ENCODE measurements at regions of chr12 and their contacts with region 1.

Region 1: GRCh38 chr12:121144416-121144914 is 11.8 kb downstream of the P2RX7 start:
- DNase-seq: peak; percentile 92 to 99 (median 96)
- H3K4me3 ChIP-seq: peak overlapping the region in 1 of 3 experiments; percentile 29
- H3K4me3 Mint-ChIP-seq: peak overlapping the region; percentile 40 to 43
- H3K27ac ChIP-seq: peak overlapping the region; percentile 91 to 95
- H3K27ac Mint-ChIP-seq: peak overlapping the region; percentile 99 to 100 (median 99)
- H3K4me1 ChIP-seq: peaks cover 66 to 73% of the 10 kb centered on the region in 2 donors
- H3K4me1 Mint-ChIP-seq: peaks cover 70% of the 10 kb centered on the region
- H3K27me3 ChIP-seq: no peaks in the 10 kb centered on the region
- H3K27me3 Mint-ChIP-seq: peaks cover 0 to 3% (median 0%) of the 10 kb centered on the region in 3 donors
- CTCF ChIP-seq: no peak

Region 2: GRCh38 chr12:121089031-121089812 is 55.2 kb before region 1 on chr12:
- intact Hi-C with region 1: no loop called
- DNase-seq: no peak
- H3K4me3 ChIP-seq: no peak overlapping the region
- H3K4me3 Mint-ChIP-seq: no peak overlapping the region
- H3K27ac ChIP-seq: no peak overlapping the region
- H3K27ac Mint-ChIP-seq: no peak overlapping the region
- H3K4me1 ChIP-seq: peaks cover 16 to 23% of the 10 kb centered on the region in 2 donors
- H3K4me1 Mint-ChIP-seq: peaks cover 34% of the 10 kb centered on the region
- H3K27me3 ChIP-seq: no peaks in the 10 kb centered on the region
- H3K27me3 Mint-ChIP-seq: peaks cover 0 to 8% (median 0%) of the 10 kb centered on the region in 3 donors
- CTCF ChIP-seq: no peak

Region 3: DNA sequence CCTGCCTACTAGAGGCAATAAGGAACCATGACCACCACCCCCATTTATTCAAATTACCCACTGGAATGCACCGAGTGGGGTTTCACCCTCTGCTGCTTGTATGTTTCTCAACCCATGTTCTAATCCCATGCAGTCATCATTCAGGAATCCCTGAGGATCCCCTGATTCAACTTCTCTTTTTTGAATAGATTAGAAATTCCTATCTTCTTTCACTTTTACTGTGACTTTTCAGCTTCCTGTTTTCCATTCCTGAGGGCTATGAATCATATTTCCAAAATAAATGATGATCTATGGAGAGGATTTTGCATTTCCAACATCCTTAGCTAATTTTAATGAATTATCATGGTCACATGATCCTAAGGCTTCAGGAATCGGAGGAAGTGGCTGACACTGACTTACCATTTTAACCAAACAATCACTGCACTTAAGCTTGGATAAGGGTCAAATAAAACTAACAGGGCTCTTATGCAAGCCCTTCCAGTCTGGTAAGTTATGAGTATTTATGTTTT is 46.1 kb after region 1 on chr12:
- intact Hi-C with region 1: loop called (anchors 1 to 5 kb)
- DNase-seq: peak; percentile 89 to 98 (median 90)
- H3K4me3 ChIP-seq: peak overlapping the region in 1 of 3 experiments; percentile 1
- H3K4me3 Mint-ChIP-seq: peak overlapping the region in 1 of 2 donors; percentile 18
- H3K27ac ChIP-seq: peak overlapping the region; percentile 60 to 67
- H3K27ac Mint-ChIP-seq: peak overlapping the region; percentile 77 to 94 (median 88)
- H3K4me1 ChIP-seq: peaks cover 26 to 29% of the 10 kb centered on the region in 2 donors
- H3K4me1 Mint-ChIP-seq: peaks cover 35% of the 10 kb centered on the region
- H3K27me3 ChIP-seq: no peaks in the 10 kb centered on the region
- H3K27me3 Mint-ChIP-seq: peaks cover 0 to 6% (median 0%) of the 10 kb centered on the region in 3 donors
- CTCF ChIP-seq: no peak

Region 4: DNA sequence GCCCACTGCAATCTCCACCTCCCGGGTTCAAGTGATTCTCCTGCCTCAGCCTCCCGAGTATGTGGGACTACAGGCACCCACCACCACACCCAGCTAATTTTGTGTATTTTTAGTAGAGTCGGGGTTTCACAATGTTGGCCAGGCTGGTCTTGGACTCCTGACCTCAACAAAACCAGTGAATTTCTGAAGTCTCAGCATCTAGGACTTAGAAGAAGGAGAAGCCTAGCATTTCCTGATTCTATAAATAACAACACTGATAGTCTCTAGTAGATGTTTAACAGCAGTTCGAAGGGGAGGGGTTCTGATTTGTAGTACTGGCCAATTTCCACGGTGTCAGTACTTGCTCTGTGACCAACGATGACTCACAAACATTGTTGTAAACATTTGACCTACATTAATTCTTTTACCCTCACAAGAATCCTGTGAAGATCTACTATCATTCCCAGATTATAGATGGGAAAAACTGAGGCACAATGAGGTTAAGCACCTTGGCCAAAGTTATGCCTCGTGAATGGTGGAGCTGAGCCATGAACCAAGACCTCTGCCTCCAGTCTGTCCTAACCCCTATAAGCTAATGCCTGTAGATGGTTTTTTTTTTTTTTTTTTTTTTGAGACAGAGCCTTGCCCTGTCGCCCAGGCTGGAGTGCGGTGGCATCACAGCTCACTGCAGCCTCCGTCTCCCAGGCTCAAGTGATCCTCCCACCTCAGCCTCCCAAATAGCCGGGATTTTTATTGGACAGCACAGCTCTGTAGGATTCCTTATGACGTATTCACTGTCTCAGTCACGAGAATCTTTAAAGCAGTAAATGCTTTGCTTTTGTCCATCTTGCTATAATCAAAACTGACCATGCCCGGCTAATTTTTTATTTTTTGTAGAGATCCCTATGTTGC is 70.6 kb after region 1 on chr12:
- intact Hi-C with region 1: loop called (anchors 1 to 2 kb)
- DNase-seq: peak; percentile 90 to 97 (median 95)
- H3K4me3 ChIP-seq: peak overlapping the region in 1 of 3 experiments; percentile 41
- H3K4me3 Mint-ChIP-seq: peak overlapping the region; percentile 57 to 62
- H3K27ac ChIP-seq: peak overlapping the region; percentile 95 to 97
- H3K27ac Mint-ChIP-seq: peak overlapping the region; percentile 98 to 100 (median 99)
- H3K4me1 ChIP-seq: peaks cover 50 to 56% of the 10 kb centered on the region in 2 donors
- H3K4me1 Mint-ChIP-seq: peaks cover 53% of the 10 kb centered on the region
- H3K27me3 ChIP-seq: no peaks in the 10 kb centered on the region
- H3K27me3 Mint-ChIP-seq: peaks cover 0 to 3% (median 0%) of the 10 kb centered on the region in 3 donors
- CTCF ChIP-seq: no peak